Activated CD4-positive, alpha-beta T cell treated with anti-CD3 and anti-CD28 coated beads for 36 hours (primary cell): ENCODE measurements at regions of chr9 and their contacts with region 1.

Region 1: GRCh38 chr9:20622330-20623020 is at the start of gene MLLT3:
- DNase-seq: peak; percentile 98
- ATAC-seq: peak; percentile 86
- H3K4me3 Mint-ChIP-seq: peak within 1 kb of the TSS; percentile 98
- H3K27ac Mint-ChIP-seq: peak within 1 kb of the TSS; percentile 99
- H3K4me1 Mint-ChIP-seq: peaks cover 36% of the 10 kb centered on the region
- H3K27me3 Mint-ChIP-seq: no peaks in the 10 kb centered on the region
- total RNA-seq, gene MLLT3: 42.5 to 49.2 TPM

Region 2: DNA sequence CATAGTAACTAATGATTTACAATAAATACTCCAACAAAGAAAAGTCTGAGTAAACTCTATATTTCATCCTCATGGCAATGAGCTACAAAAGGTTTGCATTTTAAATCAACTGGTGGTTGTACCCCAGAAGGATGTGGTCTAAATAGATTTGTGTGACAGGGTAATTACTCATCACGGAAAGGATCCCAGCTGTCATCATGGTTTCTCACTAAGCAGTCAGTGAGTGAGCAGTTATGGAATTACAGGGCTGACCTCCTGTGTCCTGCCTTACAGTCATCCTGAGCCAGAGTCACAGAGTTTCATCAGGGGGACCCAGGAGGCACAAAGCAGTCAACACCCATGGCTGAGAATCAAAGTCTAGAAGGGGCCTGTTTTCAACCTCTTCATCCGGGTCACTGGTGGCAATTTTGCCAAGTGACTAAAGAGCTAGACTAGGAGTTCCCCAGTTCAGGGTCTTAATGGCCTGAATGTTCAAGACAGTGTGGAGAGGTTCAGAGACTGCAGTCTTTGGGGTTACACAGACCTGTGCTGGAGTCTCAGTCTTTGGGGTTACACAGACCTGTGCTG is 622.9 kb before region 1 on chr9:
- CTCF ChIA-PET with region 1: interaction called, 3 read pairs
- POLR2A ChIA-PET with region 1: no interaction called
- intact Hi-C with region 1: loop called (anchors 1 to 5 kb)
- DNase-seq: peak; percentile 81
- ATAC-seq: peak; percentile 94
- H3K4me3 Mint-ChIP-seq: peak overlapping the region; percentile 42
- H3K27ac Mint-ChIP-seq: peak overlapping the region; percentile 97
- H3K4me1 Mint-ChIP-seq: peaks cover 46% of the 10 kb centered on the region
- H3K27me3 Mint-ChIP-seq: no peaks in the 10 kb centered on the region

Region 3: GRCh38 chr9:20356403-20357035 is 266.0 kb before region 1 on chr9:
- CTCF ChIA-PET with region 1: interaction called, 13 read pairs
- POLR2A ChIA-PET with region 1: interaction called, 10 read pairs
- intact Hi-C with region 1: loop called (anchors 1 kb)
- DNase-seq: peak; percentile 76
- ATAC-seq: peak; percentile 34
- H3K4me3 Mint-ChIP-seq: no peak overlapping the region
- H3K27ac Mint-ChIP-seq: peak overlapping the region; percentile 0
- H3K4me1 Mint-ChIP-seq: peaks cover 62% of the 10 kb centered on the region
- H3K27me3 Mint-ChIP-seq: no peaks in the 10 kb centered on the region

Region 4: DNA sequence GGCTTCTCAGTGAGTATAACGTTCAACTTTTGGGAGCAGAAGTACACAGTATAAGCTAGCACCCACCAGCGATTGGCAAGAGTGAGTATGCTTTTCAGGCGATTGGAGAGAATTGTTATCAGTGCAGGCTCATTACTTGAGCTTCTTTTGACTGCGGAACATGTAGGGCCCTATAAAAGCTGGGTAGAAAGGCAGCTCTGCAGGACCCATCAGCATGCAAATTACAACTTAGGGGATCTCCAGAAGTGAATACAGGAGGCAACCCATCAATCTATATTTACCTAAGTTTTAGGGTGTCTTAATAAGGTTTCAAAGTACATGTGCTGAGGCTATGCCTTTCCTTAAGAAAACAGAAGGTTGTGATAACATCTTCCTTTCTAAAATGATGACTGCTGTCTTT is 225.1 kb before region 1 on chr9:
- CTCF ChIA-PET with region 1: no interaction called
- POLR2A ChIA-PET with region 1: no interaction called
- intact Hi-C with region 1: no loop called
- DNase-seq: no peak
- ATAC-seq: no peak
- H3K4me3 Mint-ChIP-seq: no peak overlapping the region
- H3K27ac Mint-ChIP-seq: no peak overlapping the region
- H3K4me1 Mint-ChIP-seq: peaks cover 49% of the 10 kb centered on the region
- H3K27me3 Mint-ChIP-seq: no peaks in the 10 kb centered on the region

Region 5: DNA sequence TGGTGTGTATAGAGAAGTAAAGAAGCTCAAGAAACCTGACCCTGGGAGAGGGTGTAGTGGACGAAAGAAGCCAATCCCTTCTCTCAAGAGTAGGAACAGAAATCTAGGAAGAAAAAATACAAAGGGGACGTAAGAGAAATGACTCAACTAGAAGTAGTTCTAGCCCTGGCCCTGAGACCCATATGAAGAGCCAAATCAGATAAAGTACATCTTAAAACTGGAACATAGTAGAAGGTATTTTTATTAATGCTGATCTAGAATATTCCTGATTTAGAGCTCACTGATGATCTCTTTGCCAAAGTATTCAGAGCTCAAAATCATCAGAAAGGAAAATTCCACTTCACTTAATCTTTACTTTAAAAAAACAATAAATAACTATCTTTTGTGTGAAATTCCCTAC is 185.0 kb before region 1 on chr9:
- CTCF ChIA-PET with region 1: no interaction called
- POLR2A ChIA-PET with region 1: no interaction called
- intact Hi-C with region 1: no loop called
- DNase-seq: no peak
- ATAC-seq: no peak
- H3K4me3 Mint-ChIP-seq: no peak overlapping the region
- H3K27ac Mint-ChIP-seq: no peak overlapping the region
- H3K4me1 Mint-ChIP-seq: peaks cover 30% of the 10 kb centered on the region
- H3K27me3 Mint-ChIP-seq: no peaks in the 10 kb centered on the region

Region 6: DNA sequence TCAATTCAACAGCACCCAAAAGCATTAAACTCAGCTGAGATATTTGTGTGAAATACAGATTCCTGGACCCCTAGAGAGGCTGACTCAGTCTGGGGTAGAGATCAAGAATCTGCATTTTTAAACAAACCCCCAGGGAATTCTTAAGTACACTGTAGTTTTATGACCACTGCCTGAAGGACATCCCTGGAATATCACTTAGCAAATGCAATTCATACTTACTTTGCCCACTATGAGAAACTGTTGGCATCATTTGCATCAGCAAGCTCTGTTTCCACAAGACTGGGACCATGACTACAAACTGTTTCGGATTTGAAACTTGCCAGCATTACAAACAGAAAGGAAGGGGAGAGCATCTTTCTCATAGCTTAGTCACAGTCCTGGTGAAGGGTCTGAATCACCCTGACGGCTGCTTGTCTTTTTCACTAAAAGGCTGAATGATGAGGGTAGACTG is 63.9 kb before region 1 on chr9:
- CTCF ChIA-PET with region 1: interaction called, 4 read pairs
- POLR2A ChIA-PET with region 1: interaction called, 9 read pairs
- intact Hi-C with region 1: loop called (anchors 1 to 2 kb)
- DNase-seq: peak; percentile 61
- ATAC-seq: peak; percentile 92
- H3K4me3 Mint-ChIP-seq: no peak overlapping the region
- H3K27ac Mint-ChIP-seq: peak overlapping the region; percentile 86
- H3K4me1 Mint-ChIP-seq: peaks cover 85% of the 10 kb centered on the region
- H3K27me3 Mint-ChIP-seq: no peaks in the 10 kb centered on the region

Region 7: DNA sequence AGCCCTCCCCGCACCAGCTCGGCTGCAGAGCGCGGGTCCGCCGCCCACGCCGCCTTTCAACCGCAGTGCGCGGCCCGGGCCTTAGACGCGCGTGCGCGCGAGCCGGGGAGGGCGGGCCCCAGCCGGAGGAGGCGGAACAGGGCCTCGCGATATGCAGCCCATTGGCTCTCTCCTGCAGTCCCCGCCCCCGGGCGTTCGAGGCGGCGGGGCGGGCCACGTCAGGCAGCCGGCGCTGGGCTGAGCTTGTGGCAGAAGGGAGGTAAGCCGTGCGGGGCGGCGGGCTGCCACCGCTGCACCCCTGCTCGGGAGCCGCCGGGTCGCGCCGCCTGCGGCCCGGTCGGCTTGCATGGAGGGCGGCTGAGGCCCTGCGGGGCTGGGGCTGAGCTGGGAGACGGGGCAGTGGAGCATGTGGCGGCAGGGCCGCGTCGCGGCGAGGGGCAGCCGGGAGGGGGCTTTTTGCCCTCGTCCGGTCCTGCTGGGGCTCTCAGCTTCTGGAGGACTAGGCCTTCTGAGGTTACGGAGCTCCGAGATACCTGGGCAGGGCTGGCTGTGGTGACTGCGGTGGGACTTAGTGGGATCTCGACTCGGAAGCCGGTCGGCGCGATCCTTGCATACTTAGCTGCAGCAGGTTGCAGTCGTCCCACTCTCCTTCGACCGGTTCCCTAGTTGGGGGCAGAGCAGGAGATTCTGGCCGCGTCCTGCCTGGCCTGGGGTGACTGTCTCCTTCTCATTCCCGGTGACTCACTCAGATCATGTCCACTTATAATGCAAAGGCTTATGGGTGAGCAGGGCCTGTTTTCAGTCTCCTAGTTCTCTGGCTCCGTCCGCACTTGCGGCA is 61.8 kb after region 1 on chr9 and contains the start of gene FOCAD:
- CTCF ChIA-PET with region 1: interaction called, 24 read pairs
- POLR2A ChIA-PET with region 1: interaction called, 26 read pairs
- intact Hi-C with region 1: loop called (anchors 1 kb)
- DNase-seq: peak; percentile 97
- ATAC-seq: peak; percentile 98
- H3K4me3 Mint-ChIP-seq: peak within 1 kb of the TSS; percentile 86
- H3K27ac Mint-ChIP-seq: peak within 1 kb of the TSS; percentile 75
- H3K4me1 Mint-ChIP-seq: peaks cover 27% of the 10 kb centered on the region
- H3K27me3 Mint-ChIP-seq: no peaks in the 10 kb centered on the region
- total RNA-seq, gene FOCAD: 32.5 to 34.3 TPM

Region 8: GRCh38 chr9:21031091-21031807 is 408.8 kb after region 1 on chr9 and contains the start of gene HACD4:
- CTCF ChIA-PET with region 1: no interaction called
- POLR2A ChIA-PET with region 1: interaction called, 4 read pairs
- intact Hi-C with region 1: loop called (anchors 2 kb)
- DNase-seq: peak; percentile 79
- ATAC-seq: peak; percentile 79
- H3K4me3 Mint-ChIP-seq: peak within 1 kb of the TSS; percentile 53
- H3K27ac Mint-ChIP-seq: peak within 1 kb of the TSS; percentile 71
- H3K4me1 Mint-ChIP-seq: peaks cover 26% of the 10 kb centered on the region
- H3K27me3 Mint-ChIP-seq: no peaks in the 10 kb centered on the region
- total RNA-seq, gene HACD4: 2.7 to 3.0 TPM